CD8-positive, alpha-beta T cell (primary cell): ENCODE measurements at regions of chr5 and their contacts with region 1.

Region 1: DNA sequence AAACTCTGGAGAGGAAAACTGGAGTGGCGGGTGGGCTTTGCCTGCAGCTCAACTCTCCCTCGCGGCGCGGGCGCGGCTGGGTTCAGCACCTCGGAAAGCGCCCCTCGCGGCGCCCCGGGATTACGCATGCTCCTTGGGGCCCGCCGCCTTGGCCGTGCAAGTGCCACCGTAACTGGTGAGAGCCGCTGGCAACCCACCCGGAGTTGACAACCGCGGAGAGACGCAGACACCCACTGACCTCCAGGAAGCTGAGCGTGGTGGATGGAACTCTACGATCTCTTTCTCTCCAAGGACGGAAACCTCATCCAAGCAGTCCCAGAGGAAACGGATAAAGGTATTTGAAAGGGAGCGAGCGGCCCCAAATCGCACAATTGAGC is 194 bp upstream of the RXFP3 start:
- DNase-seq: peak in 7 of 9 experiments; percentile 4 to 46 (median 38)
- ATAC-seq: peak; percentile 57
- H3K4me3 ChIP-seq: no peak overlapping the region
- H3K4me3 Mint-ChIP-seq: no peak overlapping the region
- H3K27ac ChIP-seq: no peak overlapping the region
- H3K27ac Mint-ChIP-seq: no peak overlapping the region
- H3K4me1 ChIP-seq: no peaks in the 10 kb centered on the region
- H3K4me1 Mint-ChIP-seq: no peaks in the 10 kb centered on the region
- H3K27me3 ChIP-seq: peaks cover 4 to 5% of the 10 kb centered on the region in 2 experiments
- H3K27me3 Mint-ChIP-seq: peaks cover 45% of the 10 kb centered on the region
- CTCF ChIP-seq: no peak

Region 2: DNA sequence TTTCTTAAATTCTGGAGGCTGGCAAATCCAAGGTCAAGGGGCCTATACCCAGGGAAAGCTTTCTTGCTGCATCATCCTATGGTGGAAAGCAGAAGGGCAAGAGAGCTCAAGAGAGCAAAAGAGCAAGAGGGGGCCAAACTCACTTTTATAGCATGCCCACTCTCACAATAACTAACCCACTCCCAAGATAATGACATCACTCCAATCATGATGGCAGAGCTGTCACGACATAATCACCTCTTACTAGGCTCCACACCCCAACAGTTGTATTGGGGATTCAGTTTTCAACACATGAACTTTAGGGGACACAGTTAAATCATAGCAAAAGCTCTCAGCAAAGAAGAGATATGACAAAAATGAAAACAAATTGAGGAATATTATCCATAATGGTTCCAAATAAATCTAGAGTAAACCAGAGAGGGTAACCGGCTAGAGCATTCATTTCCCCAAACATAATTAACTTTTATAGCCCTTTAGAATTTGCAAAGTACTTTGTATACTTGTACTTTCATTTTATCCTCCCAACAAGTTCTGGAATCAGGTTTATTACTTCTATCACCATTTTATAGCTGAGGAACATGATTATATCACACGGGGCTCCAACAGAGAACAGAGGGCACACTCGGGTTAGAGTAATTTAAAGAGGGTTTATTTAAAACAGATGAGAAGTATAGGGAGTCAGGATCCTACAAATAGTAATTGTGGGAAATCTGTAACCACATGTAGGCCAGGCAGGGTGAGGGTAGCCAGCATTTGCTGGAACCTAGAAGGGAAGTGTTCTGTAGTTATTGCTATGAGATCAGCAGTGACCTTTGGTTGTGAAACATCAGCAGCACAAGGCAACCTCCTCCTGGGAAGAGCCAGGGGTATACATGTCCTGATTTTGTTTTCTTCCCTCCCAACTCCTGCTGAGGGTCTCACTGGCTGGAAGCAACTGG is 502.4 kb before region 1 on chr5:
- CTCF ChIA-PET with region 1: interaction called, 16 read pairs
- POLR2A ChIA-PET with region 1: no interaction called
- intact Hi-C with region 1: loop called (anchors 1 kb)
- DNase-seq: no peak
- ATAC-seq: no peak
- H3K4me3 ChIP-seq: no peak overlapping the region
- H3K4me3 Mint-ChIP-seq: no peak overlapping the region
- H3K27ac ChIP-seq: no peak overlapping the region
- H3K27ac Mint-ChIP-seq: no peak overlapping the region
- H3K4me1 ChIP-seq: no peaks in the 10 kb centered on the region
- H3K4me1 Mint-ChIP-seq: peaks cover 11% of the 10 kb centered on the region
- H3K27me3 ChIP-seq: no peaks in the 10 kb centered on the region
- H3K27me3 Mint-ChIP-seq: peaks cover 2% of the 10 kb centered on the region
- CTCF ChIP-seq: no peak

Region 3: GRCh38 chr5:33470544-33470943 is 465.4 kb before region 1 on chr5:
- CTCF ChIA-PET with region 1: interaction called, 7 read pairs
- POLR2A ChIA-PET with region 1: no interaction called
- intact Hi-C with region 1: loop called in 1 of 2 experiments (anchors 10 kb)
- DNase-seq: no peak
- ATAC-seq: no peak
- H3K4me3 ChIP-seq: no peak overlapping the region
- H3K4me3 Mint-ChIP-seq: no peak overlapping the region
- H3K27ac ChIP-seq: no peak overlapping the region
- H3K27ac Mint-ChIP-seq: no peak overlapping the region
- H3K4me1 ChIP-seq: no peaks in the 10 kb centered on the region
- H3K4me1 Mint-ChIP-seq: no peaks in the 10 kb centered on the region
- H3K27me3 ChIP-seq: no peaks in the 10 kb centered on the region
- H3K27me3 Mint-ChIP-seq: no peaks in the 10 kb centered on the region
- CTCF ChIP-seq: no peak

Region 4: DNA sequence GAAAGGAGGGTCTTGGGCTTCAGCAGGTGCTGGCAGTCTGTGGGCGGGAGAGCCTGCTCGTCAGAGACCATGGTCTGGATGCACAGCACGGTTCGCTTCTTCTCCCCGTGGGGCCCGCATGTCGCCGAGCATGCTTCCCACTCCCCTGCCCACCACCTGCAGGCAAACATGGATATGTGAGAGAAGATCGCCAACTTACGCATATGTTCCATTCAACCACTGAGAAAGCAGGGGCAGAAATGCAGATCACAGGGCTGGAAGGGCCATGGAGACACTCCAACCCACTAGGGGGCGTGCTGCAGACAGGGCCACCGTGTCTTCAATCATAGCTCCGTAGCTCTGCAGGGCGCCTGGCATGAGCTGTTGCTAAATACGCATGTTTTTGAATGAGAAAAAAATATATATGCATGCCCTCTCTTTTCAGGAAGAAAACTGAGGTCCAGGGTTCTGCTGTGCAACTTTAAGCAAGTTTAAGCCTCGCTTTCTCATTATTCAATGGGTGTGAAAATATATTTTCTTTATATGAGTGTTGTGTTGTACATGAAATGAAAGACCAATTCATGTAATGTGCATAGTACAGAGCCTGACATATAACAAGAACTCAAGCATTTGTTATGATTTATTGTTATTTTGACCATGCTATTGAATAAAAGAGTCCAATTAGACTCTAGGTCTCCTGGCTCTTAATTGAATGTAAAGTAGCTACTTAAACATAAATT is 347.2 kb before region 1 on chr5:
- CTCF ChIA-PET with region 1: interaction called, 29 read pairs
- POLR2A ChIA-PET with region 1: no interaction called
- intact Hi-C with region 1: loop called in 1 of 2 experiments (anchors 1 kb)
- DNase-seq: peak in 7 of 9 experiments; percentile 2 to 50 (median 21)
- ATAC-seq: no peak
- H3K4me3 ChIP-seq: no peak overlapping the region
- H3K4me3 Mint-ChIP-seq: no peak overlapping the region
- H3K27ac ChIP-seq: no peak overlapping the region
- H3K27ac Mint-ChIP-seq: no peak overlapping the region
- H3K4me1 ChIP-seq: no peaks in the 10 kb centered on the region
- H3K4me1 Mint-ChIP-seq: no peaks in the 10 kb centered on the region
- H3K27me3 ChIP-seq: no peaks in the 10 kb centered on the region
- H3K27me3 Mint-ChIP-seq: peaks cover 6% of the 10 kb centered on the region
- CTCF ChIP-seq: no peak

Region 5: DNA sequence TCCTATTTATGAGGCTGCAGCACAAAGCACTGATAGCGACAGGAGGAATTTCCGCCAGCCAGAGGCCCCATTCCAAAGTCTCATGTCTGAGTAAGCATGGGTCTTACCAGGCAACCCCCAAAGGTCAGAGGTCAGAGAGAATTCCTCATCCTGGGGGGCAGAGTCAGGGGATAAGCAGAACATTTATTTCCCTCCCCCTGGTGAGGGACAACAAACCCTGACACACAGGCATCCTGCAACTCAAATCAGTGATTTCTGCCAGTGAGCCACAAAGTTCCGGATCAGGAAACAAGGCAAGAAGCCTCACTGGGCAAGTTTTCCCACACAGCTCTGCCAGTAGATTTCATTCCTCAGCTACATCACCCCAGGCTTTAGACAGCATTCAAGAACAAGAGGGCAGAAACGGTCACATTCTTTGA is 81.2 kb before region 1 on chr5:
- CTCF ChIA-PET with region 1: interaction called, 4 read pairs
- POLR2A ChIA-PET with region 1: no interaction called
- intact Hi-C with region 1: loop called in 1 of 2 experiments (anchors 1 kb)
- DNase-seq: no peak
- ATAC-seq: no peak
- H3K4me3 ChIP-seq: no peak overlapping the region
- H3K4me3 Mint-ChIP-seq: no peak overlapping the region
- H3K27ac ChIP-seq: no peak overlapping the region
- H3K27ac Mint-ChIP-seq: no peak overlapping the region
- H3K4me1 ChIP-seq: peaks cover 26% of the 10 kb centered on the region
- H3K4me1 Mint-ChIP-seq: peaks cover 30% of the 10 kb centered on the region
- H3K27me3 ChIP-seq: no peaks in the 10 kb centered on the region
- H3K27me3 Mint-ChIP-seq: peaks cover 2% of the 10 kb centered on the region
- CTCF ChIP-seq: no peak

Region 6: DNA sequence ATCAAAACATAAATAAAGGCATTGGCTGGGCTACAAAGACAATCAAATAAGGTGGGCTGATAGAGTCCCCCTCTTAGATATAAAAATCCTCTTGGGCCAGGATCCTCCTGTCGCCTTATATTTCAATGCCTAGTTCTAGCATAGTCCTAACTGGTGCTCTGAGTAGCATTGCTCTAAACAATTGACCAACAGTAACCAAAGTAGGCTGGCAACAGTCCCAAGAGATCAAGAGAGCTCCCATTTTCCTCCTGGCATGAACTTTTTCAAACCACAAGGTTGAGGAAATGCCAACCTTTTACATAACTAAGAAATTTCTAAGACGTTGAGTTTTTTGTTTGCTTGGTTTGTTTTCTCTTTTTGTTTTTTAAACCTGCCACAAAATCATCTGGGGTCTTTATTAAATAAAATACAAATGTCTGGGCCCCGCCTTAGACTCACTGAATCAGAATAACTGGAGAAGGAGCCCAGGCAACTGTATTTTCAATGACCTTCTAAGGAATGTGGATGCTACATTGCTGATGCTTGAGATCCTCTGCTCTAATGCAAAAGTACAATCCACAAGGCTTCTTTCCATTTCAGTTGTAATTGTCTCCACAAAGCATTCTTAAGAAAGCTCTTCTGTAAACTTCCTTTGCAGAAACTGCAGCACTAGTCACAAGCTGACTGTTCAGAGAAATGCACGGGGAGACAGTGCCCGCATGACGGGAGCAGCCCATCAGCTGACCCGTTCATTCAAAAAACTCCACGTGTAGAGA is 45.6 kb after region 1 on chr5:
- CTCF ChIA-PET with region 1: no interaction called
- POLR2A ChIA-PET with region 1: no interaction called
- intact Hi-C with region 1: no loop called
- DNase-seq: no peak
- ATAC-seq: no peak
- H3K4me3 ChIP-seq: no peak overlapping the region
- H3K4me3 Mint-ChIP-seq: no peak overlapping the region
- H3K27ac ChIP-seq: no peak overlapping the region
- H3K27ac Mint-ChIP-seq: no peak overlapping the region
- H3K4me1 ChIP-seq: no peaks in the 10 kb centered on the region
- H3K4me1 Mint-ChIP-seq: no peaks in the 10 kb centered on the region
- H3K27me3 ChIP-seq: no peaks in the 10 kb centered on the region
- H3K27me3 Mint-ChIP-seq: no peaks in the 10 kb centered on the region
- CTCF ChIP-seq: no peak